ENCODE measurements at regions of chr4 and their contacts with region 1.

Region 1: GRCh38 chr4:7802093-7802726 is 137.5 kb downstream of the AFAP1 start:
- DNase-seq: peak; percentile 82

Region 2: GRCh38 chr4:7750523-7750922 is 51.7 kb before region 1 on chr4:
- intact Hi-C with region 1: no loop called
- DNase-seq: no peak

Region 3: DNA sequence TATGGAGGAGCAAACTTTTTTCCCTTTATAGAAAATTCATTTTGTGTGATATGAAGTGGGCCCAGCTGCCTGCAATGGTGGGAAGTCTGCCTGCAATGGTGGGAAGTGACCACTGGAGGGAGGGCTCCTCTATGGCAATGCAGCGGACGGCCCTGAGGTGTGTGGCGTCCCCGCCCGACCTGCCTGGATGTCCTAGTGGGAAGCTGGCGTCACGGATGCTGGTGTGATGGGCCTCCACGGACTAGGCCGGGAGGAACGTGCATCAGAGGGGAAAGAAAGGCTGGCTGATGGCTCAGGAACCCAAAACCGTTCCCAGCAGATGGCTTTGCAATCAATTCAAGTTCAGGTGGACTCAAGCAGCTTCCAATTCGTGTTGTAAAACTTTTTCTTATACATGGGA is 40.5 kb before region 1 on chr4:
- intact Hi-C with region 1: loop called (anchors 1 kb)
- DNase-seq: peak; percentile 87

Region 4: DNA sequence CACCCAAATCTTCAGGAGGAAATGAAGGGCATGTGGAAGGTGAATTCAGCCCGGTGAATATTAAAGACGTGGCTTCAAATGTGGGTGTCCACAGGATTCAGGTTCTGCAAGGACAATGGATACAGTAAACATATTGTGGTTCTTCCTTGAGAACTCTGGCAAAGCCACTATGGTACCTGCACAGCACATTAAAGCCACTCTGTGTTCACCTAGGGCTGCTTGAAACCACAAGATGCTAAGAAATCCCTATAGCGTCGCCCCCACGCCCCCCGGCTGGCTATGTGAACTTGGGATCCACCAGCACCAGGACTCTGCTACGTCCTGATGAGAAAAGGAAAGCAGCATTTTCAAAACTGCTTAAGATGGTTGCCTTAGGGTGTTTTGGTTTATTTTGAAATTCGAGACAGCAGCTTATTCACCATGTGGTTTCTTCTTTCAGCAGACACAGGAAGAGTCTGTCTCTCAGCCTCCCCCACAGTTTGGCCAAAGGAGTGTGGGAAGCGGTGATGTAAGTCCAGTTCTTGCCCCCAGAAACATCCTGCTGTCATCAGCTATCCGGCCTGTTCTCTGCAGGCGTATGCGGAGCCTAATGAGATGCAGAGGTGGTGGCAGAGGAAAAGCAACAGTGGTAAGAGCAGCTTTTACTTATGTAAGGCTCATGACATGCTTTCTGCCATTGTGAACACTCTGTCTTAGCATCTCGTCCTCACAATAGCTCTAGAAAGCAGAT is 25.9 kb after region 1 on chr4:
- intact Hi-C with region 1: loop called (anchors 2 kb)
- DNase-seq: peak; percentile 84

Region 5: GRCh38 chr4:7843831-7844593 is 41.8 kb after region 1 on chr4:
- intact Hi-C with region 1: loop called (anchors 1 kb)
- DNase-seq: no peak

Region 6: GRCh38 chr4:7939377-7940108 is 137.3 kb after region 1 on chr4 and contains the start of gene AFAP1:
- intact Hi-C with region 1: loop called (anchors 5 kb)
- DNase-seq: peak; percentile 95
- total RNA-seq, gene AFAP1: 8.7 TPM

Region 7: GRCh38 chr4:7987148-7987989 is 185.2 kb after region 1 on chr4:
- intact Hi-C with region 1: loop called (anchors 1 kb)
- DNase-seq: peak; percentile 82

Region 8: GRCh38 chr4:8182858-8183725 is 380.9 kb after region 1 on chr4:
- intact Hi-C with region 1: loop called (anchors 10 kb)
- DNase-seq: peak; percentile 93

Measured in cardiac septum (tissue), 1 donor.